ENCODE measurements at regions of chr12 and their contacts with region 1.

Region 1: DNA sequence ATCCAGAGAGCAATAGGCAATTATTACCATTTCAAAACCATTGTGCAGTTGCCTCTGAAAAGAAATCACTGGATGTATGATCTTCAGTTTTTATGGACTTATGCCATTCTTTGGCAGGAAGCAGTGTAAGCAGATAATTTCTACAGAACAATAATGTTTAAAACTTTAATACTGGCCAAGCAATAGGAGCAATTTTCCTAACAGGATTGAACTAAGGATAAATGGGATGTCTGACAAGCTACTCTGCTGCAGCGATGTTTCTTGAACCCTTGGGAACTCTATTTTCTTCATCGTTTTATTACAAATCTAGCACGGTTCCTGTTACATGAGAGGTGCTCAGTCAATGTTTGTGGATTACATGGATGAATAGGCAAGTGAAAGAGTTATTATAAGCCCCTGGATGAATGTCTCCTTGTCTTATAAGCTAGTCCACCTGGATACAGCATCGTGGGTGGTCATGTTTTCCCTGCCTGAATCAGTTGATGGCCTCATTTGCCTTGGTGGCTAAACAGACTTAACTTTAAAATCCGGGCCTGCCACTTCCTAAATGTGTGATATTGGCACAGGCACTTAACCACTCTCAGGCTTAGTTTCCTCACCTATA is 68.2 kb upstream of the MDM1 start:
- DNase-seq: peak; percentile 29
- H3K4me3 ChIP-seq: no peak overlapping the region
- H3K27ac ChIP-seq: peak overlapping the region in 1 of 4 donors; percentile 23
- H3K4me1 ChIP-seq: peaks cover 5 to 16% (median 8%) of the 10 kb centered on the region in 4 donors
- H3K27me3 ChIP-seq: no peaks in the 10 kb centered on the region
- CTCF ChIP-seq: no peak
- EP300 ChIP-seq: no peak
- POLR2A ChIP-seq: no peak

Region 2: DNA sequence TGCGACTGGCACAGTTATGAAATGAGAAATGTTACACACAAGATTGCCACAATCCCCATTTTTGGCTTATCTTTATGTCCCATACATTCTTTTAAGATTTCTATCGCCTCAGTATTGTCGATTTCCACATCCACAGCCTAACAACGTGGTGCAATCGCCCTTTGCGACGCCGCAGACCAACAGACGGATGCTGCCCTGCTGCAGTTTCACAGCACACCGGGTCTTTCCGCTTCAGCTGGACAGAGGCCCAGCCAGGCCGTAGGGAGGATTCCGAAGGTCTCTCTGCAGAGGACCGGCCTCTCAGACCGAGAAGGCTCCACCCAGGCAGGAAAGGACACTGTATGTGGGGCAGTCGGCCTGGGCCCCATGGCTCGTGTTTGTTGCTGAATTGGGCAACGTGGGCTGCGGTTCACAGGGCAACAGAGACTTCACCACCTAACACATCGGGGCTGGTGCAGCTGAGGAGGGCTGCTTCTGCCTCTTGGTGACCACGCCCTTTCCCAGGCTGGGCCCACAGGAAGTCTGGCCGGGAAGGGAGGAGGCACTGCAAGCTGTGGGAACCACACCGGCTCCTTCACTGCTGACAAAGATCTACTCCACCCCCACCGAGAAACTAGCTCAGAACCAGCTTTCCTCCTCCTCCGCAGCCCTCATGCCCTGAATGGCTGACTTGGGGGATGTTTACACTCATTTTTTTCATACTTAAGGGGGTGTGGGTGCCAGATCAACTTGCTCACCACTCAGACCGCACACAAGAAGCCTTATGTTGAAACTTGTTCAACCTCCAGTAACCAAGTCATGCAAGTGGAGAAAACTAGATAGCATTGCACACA is 35.2 kb before region 1 on chr12:
- intact Hi-C with region 1: loop called (anchors 5 kb)
- DNase-seq: peak; percentile 97
- H3K4me3 ChIP-seq: peak overlapping the region; percentile 37 to 52 (median 46)
- H3K27ac ChIP-seq: peak overlapping the region; percentile 75 to 80 (median 78)
- H3K4me1 ChIP-seq: peaks cover 19 to 32% (median 26%) of the 10 kb centered on the region in 4 donors
- H3K27me3 ChIP-seq: no peaks in the 10 kb centered on the region
- CTCF ChIP-seq: peak in 1 of 3 experiments; percentile 18
- EP300 ChIP-seq: no peak
- POLR2A ChIP-seq: no peak

Region 3: DNA sequence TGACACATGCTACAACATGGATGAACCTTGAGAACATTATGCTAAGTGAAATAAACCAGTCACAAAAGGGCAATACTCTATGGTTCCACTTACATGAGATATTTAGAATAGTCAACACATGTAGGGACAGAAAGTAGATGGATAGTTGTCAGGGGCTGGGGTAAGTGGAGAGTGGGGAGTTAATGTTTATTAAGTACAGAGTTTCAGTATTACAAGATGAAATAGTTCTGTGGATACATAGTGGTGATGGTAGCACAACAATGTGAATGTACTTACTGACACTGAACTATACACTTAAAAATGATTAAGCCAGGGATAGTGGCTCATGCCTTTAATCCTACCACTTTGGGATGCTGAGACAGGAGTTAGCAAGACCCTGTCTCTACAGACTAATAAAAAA is 295.1 kb after region 1 on chr12:
- intact Hi-C with region 1: no loop called
- DNase-seq: no peak
- H3K4me3 ChIP-seq: no peak overlapping the region
- H3K27ac ChIP-seq: no peak overlapping the region
- H3K4me1 ChIP-seq: no peaks in the 10 kb centered on the region
- H3K27me3 ChIP-seq: no peaks in the 10 kb centered on the region
- CTCF ChIP-seq: no peak
- EP300 ChIP-seq: no peak
- POLR2A ChIP-seq: no peak

Measured in esophagus muscularis mucosa (tissue), 4 donors.